Tibial artery (tissue), 4 donors: ENCODE measurements at regions of chr6 and their contacts with region 1.

Region 1: DNA sequence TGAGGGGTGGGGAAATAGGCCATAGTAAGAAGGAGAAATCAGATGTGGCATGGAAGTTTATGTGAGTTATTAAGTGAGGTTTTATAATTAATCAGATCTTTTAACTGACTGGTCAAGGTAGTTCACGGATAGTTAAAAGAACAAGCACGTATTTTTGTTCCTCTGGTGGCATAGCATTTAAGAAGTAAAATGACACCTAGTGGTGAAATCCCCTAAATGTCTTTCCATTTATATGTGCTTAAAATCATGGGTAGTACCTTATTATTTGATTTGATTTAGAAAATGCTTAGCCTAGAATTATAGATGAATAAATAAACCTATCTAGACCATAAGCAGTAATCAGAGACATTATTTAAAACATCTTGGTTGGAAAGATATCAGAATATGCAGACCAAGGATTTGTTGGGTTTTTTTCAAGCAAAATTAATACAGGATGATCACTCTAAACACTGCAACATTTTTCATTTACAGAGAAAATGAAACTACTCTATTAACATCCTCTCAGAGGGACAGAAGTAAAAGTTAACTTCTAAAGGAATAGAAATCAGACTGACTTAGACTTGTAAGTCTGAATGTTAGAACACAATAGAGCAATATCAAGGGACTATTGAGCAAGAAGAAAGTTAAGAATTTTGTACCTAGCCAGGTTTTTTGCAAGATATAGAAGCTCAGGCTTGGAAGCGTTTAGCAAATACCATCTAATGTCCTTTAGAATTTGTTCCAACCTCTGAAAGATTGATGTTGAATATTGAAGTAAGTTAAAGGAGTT is 81.1 kb downstream of the STXBP5 start:
- DNase-seq: no peak
- H3K4me3 ChIP-seq: no peak overlapping the region
- H3K27ac ChIP-seq: peak overlapping the region in 1 of 2 donors; percentile 6
- H3K4me1 ChIP-seq: peaks cover 0 to 15% (median 0%) of the 10 kb centered on the region in 4 donors
- H3K27me3 ChIP-seq: no peaks in the 10 kb centered on the region
- CTCF ChIP-seq: peak; percentile 49 to 63

Region 2: DNA sequence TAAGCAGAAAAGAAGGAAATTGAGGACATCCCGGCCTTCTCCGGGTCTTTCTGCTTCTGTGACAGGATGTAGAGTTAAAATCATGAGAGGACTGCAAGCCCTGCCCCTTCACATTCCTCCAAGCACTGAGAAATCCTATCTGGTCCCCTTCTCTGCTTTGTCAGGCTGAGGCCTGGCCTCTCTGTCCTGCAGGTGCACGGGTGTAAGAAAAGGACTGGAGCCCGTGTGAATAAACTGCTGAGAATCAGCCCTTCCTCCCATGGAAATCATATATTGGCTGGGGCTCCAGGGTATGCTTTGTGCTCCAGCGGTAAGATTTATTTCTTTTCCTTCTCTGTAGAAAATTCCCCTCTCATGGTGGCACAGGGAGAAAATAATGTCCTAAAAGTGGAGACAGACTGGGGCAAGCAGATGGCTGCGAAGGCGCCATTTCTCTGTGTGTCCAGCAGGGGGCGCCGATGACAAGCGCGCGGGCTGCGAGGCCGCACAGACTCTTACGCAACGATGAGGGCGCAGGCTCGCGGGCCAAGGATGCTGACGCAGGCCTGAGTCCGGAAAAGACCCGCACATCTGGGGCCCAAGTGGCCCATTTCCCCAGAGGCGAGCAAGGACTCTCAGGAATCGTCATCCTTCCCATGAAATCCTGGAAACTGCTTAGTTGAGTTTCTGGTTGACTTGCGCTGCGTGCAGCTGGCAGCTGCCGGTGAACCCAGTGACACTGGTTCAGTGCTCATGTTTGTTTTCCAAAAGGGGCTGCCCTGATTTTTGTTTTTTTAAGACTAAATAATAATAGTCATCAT is 427.9 kb before region 1 on chr6:
- intact Hi-C with region 1: loop called (anchors 2 kb)
- DNase-seq: peak; percentile 83 to 93
- H3K4me3 ChIP-seq: peak overlapping the region; percentile 45 to 46
- H3K27ac ChIP-seq: peak overlapping the region; percentile 58 to 70
- H3K4me1 ChIP-seq: peaks cover 0 to 6% (median 0%) of the 10 kb centered on the region in 4 donors
- H3K27me3 ChIP-seq: no peaks in the 10 kb centered on the region
- CTCF ChIP-seq: peak; percentile 96 to 99

Region 3: GRCh38 chr6:147879111-147879510 is 593.8 kb after region 1 on chr6:
- intact Hi-C with region 1: no loop called
- DNase-seq: no peak
- H3K4me3 ChIP-seq: no peak overlapping the region
- H3K27ac ChIP-seq: no peak overlapping the region
- H3K4me1 ChIP-seq: peaks cover 0 to 10% (median 0%) of the 10 kb centered on the region in 4 donors
- H3K27me3 ChIP-seq: no peaks in the 10 kb centered on the region
- CTCF ChIP-seq: no peak

Region 4: DNA sequence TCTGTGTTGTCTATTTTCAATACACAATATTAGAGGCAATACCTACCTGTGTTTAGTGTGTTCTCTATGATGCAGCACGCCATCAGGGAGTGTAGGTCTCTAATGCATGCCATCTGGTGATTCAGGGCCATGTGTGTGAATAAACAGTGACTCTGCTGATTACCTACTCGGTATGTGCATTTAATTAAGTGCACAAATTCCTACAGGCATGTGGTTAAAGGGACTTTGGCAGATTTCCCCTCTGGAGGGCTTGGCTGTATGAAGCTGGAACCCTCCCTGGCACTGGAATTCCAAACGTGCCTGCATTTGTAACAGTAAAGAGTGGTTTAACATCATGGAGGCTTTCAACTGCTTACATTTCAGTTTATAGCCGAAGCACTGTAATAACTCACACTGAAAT is 655.9 kb after region 1 on chr6:
- intact Hi-C with region 1: no loop called
- DNase-seq: no peak
- H3K4me3 ChIP-seq: no peak overlapping the region
- H3K27ac ChIP-seq: no peak overlapping the region
- H3K4me1 ChIP-seq: peaks cover 0 to 1% (median 0%) of the 10 kb centered on the region in 4 donors
- H3K27me3 ChIP-seq: no peaks in the 10 kb centered on the region
- CTCF ChIP-seq: no peak